ENCODE measurements at regions of chr14 and their contacts with region 1.

Region 1: GRCh38 chr14:91418387-91419043 is 895 bp upstream of the CCDC88C start:
- DNase-seq: peak; percentile 67 to 91 (median 80)
- ATAC-seq: peak; percentile 28
- H3K4me3 ChIP-seq: peak overlapping the region; percentile 56
- H3K4me3 Mint-ChIP-seq: peak overlapping the region; percentile 86
- H3K27ac ChIP-seq: peak overlapping the region; percentile 52 to 78
- H3K27ac Mint-ChIP-seq: peak overlapping the region; percentile 86
- H3K4me1 ChIP-seq: peaks cover 35% of the 10 kb centered on the region
- H3K4me1 Mint-ChIP-seq: peaks cover 46% of the 10 kb centered on the region
- H3K27me3 ChIP-seq: no peaks in the 10 kb centered on the region
- H3K27me3 Mint-ChIP-seq: no peaks in the 10 kb centered on the region
- CTCF ChIP-seq: peak; percentile 97

Region 2: DNA sequence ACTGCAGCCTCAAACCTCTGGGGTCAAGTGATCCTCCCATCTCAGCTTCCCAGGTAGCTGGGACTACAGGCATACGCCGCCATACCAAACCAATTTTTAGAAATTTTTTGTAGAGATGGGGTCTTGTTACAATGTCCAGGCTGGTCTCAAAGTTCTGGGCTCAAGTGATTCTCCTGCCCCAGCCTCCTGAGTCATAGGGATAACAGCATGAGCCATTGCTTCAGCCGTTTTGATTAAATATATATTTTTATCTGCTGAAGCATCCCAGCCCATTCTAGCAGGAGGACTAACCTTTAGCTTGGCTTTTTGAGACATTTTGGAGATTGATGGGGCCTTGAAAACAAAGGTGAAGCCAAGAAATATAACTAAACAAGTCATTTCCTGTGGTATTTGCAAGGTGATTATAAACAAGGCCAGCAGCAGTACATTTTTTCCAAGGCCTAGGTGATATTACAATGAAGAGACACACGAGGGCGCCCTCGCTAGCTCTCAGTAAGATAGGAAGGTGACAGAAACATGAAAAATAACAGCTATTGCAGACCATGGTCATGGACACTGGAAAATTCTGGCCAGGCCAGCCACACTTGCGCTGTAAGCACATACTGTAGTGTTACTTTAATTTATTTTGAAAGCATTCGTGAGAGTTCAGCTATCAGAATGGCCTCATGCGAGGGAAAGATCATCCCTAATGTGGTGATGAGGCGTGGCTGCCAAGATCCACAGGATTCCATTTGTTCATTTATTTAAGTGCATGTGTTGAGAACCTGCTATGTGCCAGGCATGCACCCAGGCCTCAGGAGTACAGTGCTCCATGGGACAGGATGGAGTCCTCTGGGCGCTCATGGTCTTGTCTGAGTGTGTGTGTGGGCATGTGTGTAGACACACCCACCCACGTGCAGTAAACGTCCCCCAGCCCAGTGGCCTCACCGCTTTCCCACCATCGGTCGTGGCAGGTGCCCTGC is 241.2 kb before region 1 on chr14:
- CTCF ChIA-PET with region 1: interaction called, 3 read pairs
- POLR2A ChIA-PET with region 1: no interaction called
- intact Hi-C with region 1: loop called in 1 of 2 experiments (anchors 2 kb)
- DNase-seq: peak; percentile 47 to 89 (median 58)
- ATAC-seq: peak; percentile 93
- H3K4me3 ChIP-seq: no peak overlapping the region
- H3K4me3 Mint-ChIP-seq: no peak overlapping the region
- H3K27ac ChIP-seq: peak overlapping the region in 1 of 2 donors; percentile 40
- H3K27ac Mint-ChIP-seq: peak overlapping the region; percentile 47
- H3K4me1 ChIP-seq: peaks cover 17% of the 10 kb centered on the region
- H3K4me1 Mint-ChIP-seq: peaks cover 17% of the 10 kb centered on the region
- H3K27me3 ChIP-seq: no peaks in the 10 kb centered on the region
- H3K27me3 Mint-ChIP-seq: no peaks in the 10 kb centered on the region
- CTCF ChIP-seq: peak; percentile 91

Region 3: DNA sequence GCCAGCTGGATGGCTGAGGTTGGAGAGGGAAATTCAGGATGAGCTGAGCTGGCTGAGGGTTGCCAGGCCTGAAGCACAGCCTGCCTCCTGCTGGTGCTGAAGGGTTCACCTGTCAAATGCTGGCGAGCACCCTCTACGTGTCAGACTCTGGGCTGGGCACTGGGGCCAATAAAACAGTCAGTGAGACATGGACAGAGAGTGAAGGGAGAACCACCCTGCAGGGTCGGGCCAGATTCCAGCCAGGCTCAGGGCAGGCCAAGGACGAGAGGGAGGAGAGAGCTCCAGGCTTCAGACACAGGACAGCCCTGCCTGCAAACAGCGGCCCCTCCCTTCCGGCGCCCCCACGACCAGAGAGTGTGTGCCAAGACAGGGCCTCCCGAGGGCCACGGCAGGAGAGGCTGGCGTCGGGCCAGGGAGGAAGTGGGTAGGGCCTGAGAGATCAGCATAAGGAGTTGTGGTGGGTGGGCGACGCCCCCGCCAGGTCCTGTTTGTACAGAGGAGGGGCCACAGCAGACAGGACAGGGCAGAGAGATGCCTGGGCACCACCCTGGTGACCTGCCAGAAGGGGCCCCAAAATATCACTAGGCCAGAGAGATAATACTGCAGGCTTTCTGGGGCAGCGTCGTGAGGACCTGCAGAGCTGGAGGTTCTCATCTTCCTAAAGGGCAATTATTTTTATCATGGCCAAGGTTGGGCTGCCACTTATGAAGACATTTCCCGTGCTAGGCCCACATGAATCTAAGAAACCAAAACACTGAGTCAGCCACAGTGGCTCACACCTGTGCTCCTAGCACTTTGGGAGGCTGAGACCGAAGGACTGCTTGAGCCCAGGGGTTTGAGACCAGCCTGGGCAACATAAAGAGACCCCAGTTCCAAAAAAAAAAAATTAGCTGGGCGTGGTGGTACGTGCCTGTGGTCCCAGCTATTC is 100.9 kb before region 1 on chr14:
- CTCF ChIA-PET with region 1: interaction called, 6 read pairs
- POLR2A ChIA-PET with region 1: interaction called, 46 read pairs
- intact Hi-C with region 1: no loop called
- DNase-seq: peak; percentile 56 to 94 (median 85)
- ATAC-seq: peak; percentile 52
- H3K4me3 ChIP-seq: peak overlapping the region; percentile 1
- H3K4me3 Mint-ChIP-seq: peak overlapping the region; percentile 85
- H3K27ac ChIP-seq: peak overlapping the region; percentile 89 to 91
- H3K27ac Mint-ChIP-seq: peak overlapping the region; percentile 97
- H3K4me1 ChIP-seq: peaks cover 99% of the 10 kb centered on the region
- H3K4me1 Mint-ChIP-seq: peaks cover 77% of the 10 kb centered on the region
- H3K27me3 ChIP-seq: no peaks in the 10 kb centered on the region
- H3K27me3 Mint-ChIP-seq: no peaks in the 10 kb centered on the region
- CTCF ChIP-seq: peak; percentile 36

Region 4: GRCh38 chr14:91350813-91351511 is 67.6 kb before region 1 on chr14:
- CTCF ChIA-PET with region 1: interaction called, 23 read pairs
- POLR2A ChIA-PET with region 1: interaction called, 95 read pairs
- intact Hi-C with region 1: loop called (anchors 1 to 2 kb)
- DNase-seq: peak in 8 of 14 experiments; percentile 30 to 91 (median 54)
- ATAC-seq: peak; percentile 65
- H3K4me3 ChIP-seq: peak overlapping the region; percentile 47
- H3K4me3 Mint-ChIP-seq: peak overlapping the region; percentile 89
- H3K27ac ChIP-seq: peak overlapping the region; percentile 77 to 81
- H3K27ac Mint-ChIP-seq: peak overlapping the region; percentile 94
- H3K4me1 ChIP-seq: peaks cover 91% of the 10 kb centered on the region
- H3K4me1 Mint-ChIP-seq: peaks cover 89% of the 10 kb centered on the region
- H3K27me3 ChIP-seq: no peaks in the 10 kb centered on the region
- H3K27me3 Mint-ChIP-seq: no peaks in the 10 kb centered on the region
- CTCF ChIP-seq: no peak

Region 5: GRCh38 chr14:91396959-91397815 is 21.3 kb before region 1 on chr14:
- CTCF ChIA-PET with region 1: interaction called, 62 read pairs
- POLR2A ChIA-PET with region 1: interaction called, 294 read pairs
- intact Hi-C with region 1: loop called (anchors 1 to 2 kb)
- DNase-seq: peak in 13 of 14 experiments; percentile 48 to 87 (median 64)
- ATAC-seq: peak; percentile 76
- H3K4me3 ChIP-seq: peak overlapping the region; percentile 67
- H3K4me3 Mint-ChIP-seq: peak overlapping the region; percentile 78
- H3K27ac ChIP-seq: peak overlapping the region; percentile 26 to 66
- H3K27ac Mint-ChIP-seq: peak overlapping the region; percentile 98
- H3K4me1 ChIP-seq: peaks cover 98% of the 10 kb centered on the region
- H3K4me1 Mint-ChIP-seq: peaks cover 90% of the 10 kb centered on the region
- H3K27me3 ChIP-seq: no peaks in the 10 kb centered on the region
- H3K27me3 Mint-ChIP-seq: no peaks in the 10 kb centered on the region
- CTCF ChIP-seq: no peak

Measured in CD4-positive, alpha-beta T cell (primary cell).